ENCODE measurements at regions of chr10 and their contacts with region 1.

Region 1: GRCh38 chr10:28532383-28533175 is at the start of gene WAC:
- DNase-seq: peak; percentile 93 to 99 (median 97)
- ATAC-seq: peak; percentile 89
- H3K4me3 ChIP-seq: peak within 1 kb of the TSS; percentile 94
- H3K4me3 Mint-ChIP-seq: peak within 1 kb of the TSS; percentile 97 to 99 (median 99)
- H3K27ac ChIP-seq: peak within 1 kb of the TSS; percentile 98
- H3K27ac Mint-ChIP-seq: peak within 1 kb of the TSS; percentile 99 to 100 (median 100)
- H3K4me1 ChIP-seq: peaks cover 25 to 34% of the 10 kb centered on the region in 2 donors
- H3K4me1 Mint-ChIP-seq: peaks cover 43 to 78% (median 71%) of the 10 kb centered on the region in 7 donors
- H3K27me3 ChIP-seq: no peaks in the 10 kb centered on the region
- H3K27me3 Mint-ChIP-seq: peaks cover 0 to 2% (median 0%) of the 10 kb centered on the region in 5 donors
- total RNA-seq, gene WAC: 143 to 184 (median 179) TPM

Region 2: GRCh38 chr10:26860443-26861204 is 1672.0 kb before region 1 on chr10 and contains the start of gene ABI1:
- CTCF ChIA-PET with region 1: no interaction called
- POLR2A ChIA-PET with region 1: no interaction called
- intact Hi-C with region 1: loop called (anchors 1 to 2 kb)
- DNase-seq: peak; percentile 94 to 100 (median 99)
- ATAC-seq: peak; percentile 94
- H3K4me3 ChIP-seq: peak within 1 kb of the TSS; percentile 80
- H3K4me3 Mint-ChIP-seq: peak within 1 kb of the TSS; percentile 88 to 100 (median 97)
- H3K27ac ChIP-seq: peak within 1 kb of the TSS; percentile 96
- H3K27ac Mint-ChIP-seq: peak within 1 kb of the TSS; percentile 95 to 100 (median 97)
- H3K4me1 ChIP-seq: peaks cover 18 to 22% of the 10 kb centered on the region in 2 donors
- H3K4me1 Mint-ChIP-seq: peaks cover 16 to 45% (median 32%) of the 10 kb centered on the region in 7 donors
- H3K27me3 ChIP-seq: no peaks in the 10 kb centered on the region
- H3K27me3 Mint-ChIP-seq: peaks cover 0 to 26% (median 0%) of the 10 kb centered on the region in 5 donors
- total RNA-seq, gene ABI1: 61.9 to 73.7 (median 65.4) TPM

Region 3: GRCh38 chr10:27504007-27504807 is 1028.4 kb before region 1 on chr10 and contains the start of gene RAB18:
- CTCF ChIA-PET with region 1: no interaction called
- POLR2A ChIA-PET with region 1: interaction called, 8 read pairs
- intact Hi-C with region 1: loop called (anchors 1 kb)
- DNase-seq: peak; percentile 93 to 99 (median 98)
- ATAC-seq: peak; percentile 97
- H3K4me3 ChIP-seq: peak within 1 kb of the TSS; percentile 82
- H3K4me3 Mint-ChIP-seq: peak within 1 kb of the TSS; percentile 95 to 100 (median 99)
- H3K27ac ChIP-seq: peak within 1 kb of the TSS; percentile 87
- H3K27ac Mint-ChIP-seq: peak within 1 kb of the TSS; percentile 96 to 99 (median 98)
- H3K4me1 ChIP-seq: peaks cover 13 to 18% of the 10 kb centered on the region in 2 donors
- H3K4me1 Mint-ChIP-seq: peaks cover 39 to 59% (median 55%) of the 10 kb centered on the region in 7 donors
- H3K27me3 ChIP-seq: no peaks in the 10 kb centered on the region
- H3K27me3 Mint-ChIP-seq: peaks cover 0 to 7% (median 0%) of the 10 kb centered on the region in 5 donors
- total RNA-seq, gene RAB18: 69.1 to 96.1 (median 73.6) TPM

Region 4: GRCh38 chr10:28111712-28112111 is 420.9 kb before region 1 on chr10:
- CTCF ChIA-PET with region 1: no interaction called
- POLR2A ChIA-PET with region 1: no interaction called
- intact Hi-C with region 1: no loop called
- DNase-seq: no peak
- ATAC-seq: no peak
- H3K4me3 ChIP-seq: no peak overlapping the region
- H3K4me3 Mint-ChIP-seq: no peak overlapping the region
- H3K27ac ChIP-seq: no peak overlapping the region
- H3K27ac Mint-ChIP-seq: peak overlapping the region in 1 of 9 donors; percentile 4
- H3K4me1 ChIP-seq: no peaks in the 10 kb centered on the region
- H3K4me1 Mint-ChIP-seq: peaks cover 0 to 6% (median 0%) of the 10 kb centered on the region in 7 donors
- H3K27me3 ChIP-seq: no peaks in the 10 kb centered on the region
- H3K27me3 Mint-ChIP-seq: no peaks in the 10 kb centered on the region

Region 5: DNA sequence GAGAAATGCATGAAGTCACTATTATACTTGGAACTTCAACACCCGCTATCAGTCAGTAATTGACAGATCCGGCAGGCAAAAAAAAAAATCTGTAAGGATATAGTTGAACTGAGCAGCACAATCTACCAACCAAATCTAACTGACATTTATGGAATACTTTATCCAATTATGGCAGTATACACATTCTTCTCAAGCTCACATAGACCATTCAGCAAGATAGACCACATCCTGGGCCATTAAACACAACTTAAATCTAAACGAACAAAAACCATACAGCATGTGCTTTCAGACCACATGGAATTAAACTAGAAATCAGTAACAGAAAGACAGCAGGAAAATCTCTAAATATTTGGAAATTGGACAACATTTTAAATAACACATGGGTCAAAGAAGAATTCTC is 342.4 kb before region 1 on chr10:
- CTCF ChIA-PET with region 1: no interaction called
- POLR2A ChIA-PET with region 1: no interaction called
- intact Hi-C with region 1: no loop called
- DNase-seq: no peak
- ATAC-seq: no peak
- H3K4me3 ChIP-seq: no peak overlapping the region
- H3K4me3 Mint-ChIP-seq: peak overlapping the region in 5 of 10 donors; percentile 3 to 32 (median 6)
- H3K27ac ChIP-seq: no peak overlapping the region
- H3K27ac Mint-ChIP-seq: peak overlapping the region in 4 of 9 donors; percentile 11 to 34 (median 22)
- H3K4me1 ChIP-seq: no peaks in the 10 kb centered on the region
- H3K4me1 Mint-ChIP-seq: peaks cover 2 to 64% (median 46%) of the 10 kb centered on the region in 7 donors
- H3K27me3 ChIP-seq: no peaks in the 10 kb centered on the region
- H3K27me3 Mint-ChIP-seq: peaks cover 0 to 4% (median 0%) of the 10 kb centered on the region in 5 donors

Region 6: DNA sequence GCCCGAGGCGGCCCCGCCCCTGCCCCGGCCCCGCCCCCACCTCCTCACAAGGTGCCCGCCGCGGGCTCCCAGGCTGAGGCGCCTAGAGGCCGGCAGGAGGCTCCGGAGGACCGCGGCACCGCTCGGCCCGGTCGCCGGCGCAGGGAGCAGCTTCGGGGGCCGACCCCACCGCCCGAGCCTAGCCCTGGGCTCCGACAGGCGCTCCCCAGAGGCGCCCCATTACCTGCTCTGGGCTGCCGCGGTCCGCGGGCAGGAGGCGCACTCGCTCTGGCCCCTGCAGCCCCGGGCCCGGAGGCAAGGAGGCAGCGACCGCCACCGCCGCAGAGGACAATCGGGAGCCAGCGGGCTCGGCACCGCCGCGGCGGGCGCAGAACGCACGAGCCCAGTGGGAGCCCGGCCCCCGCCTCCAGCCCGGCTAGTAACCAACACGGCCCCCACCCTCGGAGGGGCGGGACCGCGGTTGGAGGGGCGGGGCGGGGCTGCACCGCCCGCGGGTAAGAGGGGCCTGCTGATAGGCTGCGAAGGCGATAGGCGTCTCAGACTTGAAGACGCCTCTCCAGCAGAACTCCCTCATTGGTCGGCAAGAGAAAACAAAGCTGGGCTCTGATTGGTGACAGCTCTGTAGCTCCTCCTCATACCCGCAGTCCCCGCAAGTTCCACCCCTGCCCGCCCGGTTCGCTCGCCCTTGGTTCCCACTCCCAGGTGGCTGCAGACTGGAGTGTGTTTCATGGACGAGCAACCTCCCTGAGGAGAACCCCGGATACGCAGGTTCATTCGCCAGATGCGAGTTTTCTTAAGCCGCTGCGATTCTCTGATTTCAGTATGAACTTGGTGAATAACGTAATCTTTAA is 229.7 kb before region 1 on chr10 and contains the start of gene MPP7:
- CTCF ChIA-PET with region 1: no interaction called
- POLR2A ChIA-PET with region 1: interaction called, 5 read pairs
- intact Hi-C with region 1: loop called (anchors 1 kb)
- DNase-seq: peak; percentile 96 to 98 (median 97)
- ATAC-seq: peak; percentile 97
- H3K4me3 ChIP-seq: peak within 1 kb of the TSS; percentile 92
- H3K4me3 Mint-ChIP-seq: peak within 1 kb of the TSS; percentile 85 to 99 (median 93)
- H3K27ac ChIP-seq: peak within 1 kb of the TSS; percentile 86
- H3K27ac Mint-ChIP-seq: peak within 1 kb of the TSS; percentile 67 to 98 (median 94)
- H3K4me1 ChIP-seq: peaks cover 8 to 42% of the 10 kb centered on the region in 2 donors
- H3K4me1 Mint-ChIP-seq: peaks cover 27 to 80% (median 67%) of the 10 kb centered on the region in 7 donors
- H3K27me3 ChIP-seq: no peaks in the 10 kb centered on the region
- H3K27me3 Mint-ChIP-seq: peaks cover 0 to 51% (median 0%) of the 10 kb centered on the region in 5 donors
- total RNA-seq, gene MPP7: 9.7 to 44.7 (median 36.1) TPM

Region 7: DNA sequence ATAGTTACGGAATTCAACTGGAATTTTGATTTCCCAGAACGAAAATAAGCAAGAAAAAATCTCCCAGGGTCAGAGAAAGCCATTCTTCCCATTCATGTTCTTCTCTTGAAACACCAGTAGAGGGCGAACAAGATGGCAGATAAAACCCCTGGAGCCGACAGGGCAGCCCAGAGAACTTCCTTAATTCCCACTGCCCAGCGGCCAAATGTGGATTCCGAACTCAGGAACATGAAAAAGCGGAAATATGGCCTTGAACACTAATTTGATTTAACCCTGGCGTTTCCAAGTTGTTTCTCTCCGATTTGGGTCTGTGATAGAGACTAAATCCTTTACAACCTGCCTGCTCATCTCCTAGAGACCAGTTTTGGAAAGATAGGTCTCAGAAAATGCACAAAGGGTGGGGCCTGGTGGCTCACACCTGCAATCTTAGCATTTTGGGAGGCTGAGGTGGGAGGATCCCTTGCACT is 100.3 kb before region 1 on chr10:
- CTCF ChIA-PET with region 1: no interaction called
- POLR2A ChIA-PET with region 1: no interaction called
- intact Hi-C with region 1: loop called (anchors 1 to 5 kb)
- DNase-seq: peak in 7 of 9 donors; percentile 11 to 45 (median 35)
- ATAC-seq: peak; percentile 83
- H3K4me3 ChIP-seq: no peak overlapping the region
- H3K4me3 Mint-ChIP-seq: peak overlapping the region in 9 of 10 donors; percentile 17 to 80 (median 57)
- H3K27ac ChIP-seq: no peak overlapping the region
- H3K27ac Mint-ChIP-seq: no peak overlapping the region
- H3K4me1 ChIP-seq: no peaks in the 10 kb centered on the region
- H3K4me1 Mint-ChIP-seq: peaks cover 4 to 9% (median 7%) of the 10 kb centered on the region in 7 donors
- H3K27me3 ChIP-seq: no peaks in the 10 kb centered on the region
- H3K27me3 Mint-ChIP-seq: peaks cover 0 to 7% (median 0%) of the 10 kb centered on the region in 5 donors

Region 8: DNA sequence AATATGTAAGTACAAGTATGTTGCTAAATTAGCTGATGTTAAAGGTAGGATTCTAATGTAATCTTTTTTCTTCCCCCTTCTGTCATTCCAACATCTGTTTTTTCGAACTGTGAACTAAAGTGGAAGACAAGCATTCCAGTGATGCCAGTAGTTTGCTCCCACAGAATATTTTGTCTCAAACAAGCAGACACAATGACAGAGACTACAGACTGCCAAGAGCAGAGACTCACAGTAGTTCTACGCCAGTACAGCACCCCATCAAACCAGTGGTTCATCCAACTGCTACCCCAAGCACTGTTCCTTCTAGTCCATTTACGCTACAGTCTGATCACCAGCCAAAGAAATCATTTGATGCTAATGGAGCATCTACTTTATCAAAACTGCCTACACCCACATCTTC is 63.0 kb after region 1 on chr10:
- CTCF ChIA-PET with region 1: no interaction called
- POLR2A ChIA-PET with region 1: no interaction called
- intact Hi-C with region 1: loop called in 1 of 2 experiments (anchors 2 kb)
- DNase-seq: no peak
- ATAC-seq: no peak
- H3K4me3 ChIP-seq: no peak overlapping the region
- H3K4me3 Mint-ChIP-seq: peak overlapping the region in 2 of 10 donors; percentile 20 to 40
- H3K27ac ChIP-seq: no peak overlapping the region
- H3K27ac Mint-ChIP-seq: peak overlapping the region in 3 of 9 donors; percentile 16 to 23 (median 22)
- H3K4me1 ChIP-seq: peaks cover 6 to 16% of the 10 kb centered on the region in 2 donors
- H3K4me1 Mint-ChIP-seq: peaks cover 46 to 91% (median 84%) of the 10 kb centered on the region in 7 donors
- H3K27me3 ChIP-seq: no peaks in the 10 kb centered on the region
- H3K27me3 Mint-ChIP-seq: no peaks in the 10 kb centered on the region